Mammary epithelial cell (primary cell): ENCODE measurements at regions of chr4 and their contacts with region 1.

Region 1: GRCh38 chr4:14719053-14719452 is 283.2 kb upstream of the CPEB2 start:
- DNase-seq: peak; percentile 31
- H3K4me3 ChIP-seq: no peak overlapping the region
- H3K27ac ChIP-seq: no peak overlapping the region
- H3K4me1 ChIP-seq: no peaks in the 10 kb centered on the region
- H3K27me3 ChIP-seq: no peaks in the 10 kb centered on the region
- CTCF ChIP-seq: no peak

Region 2: GRCh38 chr4:14321723-14322122 is 397.3 kb before region 1 on chr4:
- CTCF ChIA-PET with region 1: interaction called, 14 read pairs
- dilution Hi-C with region 1: no loop called
- in situ Hi-C with region 1: no loop called
- intact Hi-C with region 1: no loop called
- DNase-seq: no peak
- H3K4me3 ChIP-seq: no peak overlapping the region
- H3K27ac ChIP-seq: no peak overlapping the region
- H3K4me1 ChIP-seq: peaks cover 3% of the 10 kb centered on the region
- H3K27me3 ChIP-seq: no peaks in the 10 kb centered on the region
- CTCF ChIP-seq: no peak